ENCODE measurements at regions of chr12 and their contacts with region 1.

Region 1: GRCh38 chr12:121499929-121500793 is 80.7 kb downstream of the KDM2B start:
- DNase-seq: peak; percentile 77
- H3K4me3 ChIP-seq: peak overlapping the region; percentile 45
- H3K27ac ChIP-seq: no peak overlapping the region
- H3K4me1 ChIP-seq: peaks cover 13% of the 10 kb centered on the region
- CTCF ChIP-seq: peak; percentile 96

Region 2: DNA sequence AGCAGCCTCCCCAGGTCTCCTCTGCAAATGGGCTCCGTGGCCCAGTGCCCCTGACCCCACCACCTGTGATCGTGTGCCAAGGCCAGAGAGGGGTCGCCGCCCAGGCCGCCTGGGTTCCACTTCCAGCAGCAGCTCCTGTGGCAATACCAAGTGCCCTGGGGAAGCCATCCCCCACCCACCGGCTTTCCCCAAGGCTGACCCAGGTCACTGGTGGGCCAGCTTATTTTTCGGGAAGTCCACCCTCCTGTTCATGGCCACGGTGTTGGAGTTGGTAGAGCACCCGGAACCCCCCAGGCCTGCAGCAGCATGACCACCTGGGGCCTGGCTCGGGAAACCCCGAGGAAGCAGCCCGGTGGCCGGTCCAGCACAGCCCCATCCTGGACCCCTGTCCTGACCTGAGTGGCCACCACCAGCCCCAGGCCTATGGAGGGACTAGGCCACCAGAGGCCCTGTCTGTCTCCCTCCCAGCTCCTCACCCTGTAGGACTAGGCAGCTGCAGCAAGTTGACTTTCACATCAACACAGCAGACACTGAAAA is 420.4 kb before region 1 on chr12:
- CTCF ChIA-PET with region 1: no interaction called
- POLR2A ChIA-PET with region 1: no interaction called
- intact Hi-C with region 1: no loop called
- DNase-seq: no peak
- H3K4me3 ChIP-seq: no peak overlapping the region
- H3K27ac ChIP-seq: no peak overlapping the region
- H3K4me1 ChIP-seq: no peaks in the 10 kb centered on the region
- CTCF ChIP-seq: no peak

Region 3: GRCh38 chr12:121522971-121523370 is 22.8 kb after region 1 on chr12:
- CTCF ChIA-PET with region 1: no interaction called
- POLR2A ChIA-PET with region 1: interaction called, 10 read pairs
- intact Hi-C with region 1: no loop called
- DNase-seq: peak; percentile 89
- H3K4me3 ChIP-seq: peak overlapping the region; percentile 54
- H3K27ac ChIP-seq: peak overlapping the region; percentile 84
- H3K4me1 ChIP-seq: peaks cover 45% of the 10 kb centered on the region
- CTCF ChIP-seq: no peak

Region 4: DNA sequence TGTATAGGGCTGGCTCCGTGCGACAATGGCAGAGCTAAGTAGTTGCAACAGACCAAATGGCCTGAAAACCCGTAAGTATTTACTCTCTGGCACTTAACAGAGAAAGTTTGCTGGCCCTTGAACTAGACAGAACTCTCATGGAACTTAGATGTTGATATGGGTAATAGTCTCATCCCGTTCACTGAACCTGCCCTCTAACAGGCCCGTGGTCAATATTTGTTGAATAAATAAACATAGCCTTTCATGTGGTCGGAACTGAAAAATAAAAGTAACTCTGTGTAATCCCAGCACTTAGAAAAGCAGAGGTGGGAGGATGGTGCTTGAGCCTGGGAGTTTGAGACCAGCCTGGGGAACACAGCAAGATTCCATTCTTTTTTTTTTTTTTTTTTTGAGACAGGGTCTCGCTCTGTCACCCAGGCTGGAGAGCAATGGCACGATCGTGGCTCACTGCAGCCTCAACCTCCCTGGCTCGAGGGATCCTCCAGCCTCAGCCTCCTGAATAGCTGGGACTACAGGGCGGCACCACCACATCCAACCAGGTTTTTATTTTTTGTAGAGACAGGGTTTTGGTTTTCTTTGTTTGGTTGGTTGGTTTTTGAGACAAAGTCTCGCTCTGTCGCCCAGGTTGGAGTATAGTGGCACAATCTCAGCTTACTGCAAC is 50.9 kb after region 1 on chr12:
- CTCF ChIA-PET with region 1: no interaction called
- POLR2A ChIA-PET with region 1: no interaction called
- intact Hi-C with region 1: no loop called
- DNase-seq: no peak
- H3K4me3 ChIP-seq: no peak overlapping the region
- H3K27ac ChIP-seq: no peak overlapping the region
- H3K4me1 ChIP-seq: no peaks in the 10 kb centered on the region
- CTCF ChIP-seq: no peak

Region 5: DNA sequence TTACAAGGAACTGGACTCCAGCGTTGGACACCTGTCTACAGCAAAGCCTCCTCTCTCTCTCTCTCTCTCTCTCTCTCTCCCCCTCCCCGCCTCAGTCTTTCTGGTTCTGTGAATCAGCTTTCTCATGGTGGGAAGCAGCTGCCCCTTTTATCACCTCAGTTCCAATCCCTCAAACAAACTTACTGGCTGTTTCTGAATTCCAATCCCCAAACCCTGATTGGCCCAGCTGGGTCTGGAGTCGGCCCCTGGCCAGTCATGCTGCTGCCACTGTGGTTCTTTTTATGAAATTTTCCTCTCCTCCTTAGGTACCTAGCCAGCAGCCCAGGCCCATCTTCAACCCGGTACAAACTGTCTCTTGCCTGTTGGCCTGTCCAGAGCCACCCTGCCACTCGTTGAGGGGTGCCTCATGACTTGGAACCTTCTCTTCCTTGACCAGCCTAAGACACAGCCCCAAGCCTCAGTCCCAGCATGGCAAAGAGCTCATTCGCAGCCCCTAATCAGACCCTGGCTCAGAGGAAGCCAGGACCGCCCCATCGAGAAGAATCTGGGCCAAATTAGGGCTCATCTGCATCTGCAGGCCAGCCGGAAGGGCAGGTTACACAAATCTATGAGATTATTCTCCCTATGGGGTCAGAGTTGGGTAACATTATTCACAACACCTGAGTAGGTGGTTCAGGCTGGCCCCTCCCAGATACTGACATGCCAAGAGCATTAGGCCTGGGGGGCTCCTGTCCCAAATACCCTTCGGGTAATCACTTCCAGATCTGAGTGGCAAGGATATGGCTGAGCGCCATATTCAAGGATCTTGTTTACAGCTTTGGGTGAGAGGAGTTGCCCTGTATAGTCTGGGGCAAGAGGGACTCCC is 178.8 kb after region 1 on chr12:
- CTCF ChIA-PET with region 1: no interaction called
- POLR2A ChIA-PET with region 1: no interaction called
- intact Hi-C with region 1: loop called (anchors 1 kb)
- DNase-seq: no peak
- H3K4me3 ChIP-seq: no peak overlapping the region
- H3K27ac ChIP-seq: no peak overlapping the region
- H3K4me1 ChIP-seq: peaks cover 8% of the 10 kb centered on the region
- CTCF ChIP-seq: no peak

Region 6: GRCh38 chr12:121849665-121850064 is 349.5 kb after region 1 on chr12:
- CTCF ChIA-PET with region 1: no interaction called
- POLR2A ChIA-PET with region 1: no interaction called
- intact Hi-C with region 1: no loop called
- DNase-seq: no peak
- H3K4me3 ChIP-seq: no peak overlapping the region
- H3K27ac ChIP-seq: no peak overlapping the region
- H3K4me1 ChIP-seq: no peaks in the 10 kb centered on the region
- CTCF ChIP-seq: no peak

Measured in OCI-LY7 (cell line).